Ovary (tissue), 10 donors: ENCODE measurements at regions of chr11 and their contacts with region 1.

Region 1: DNA sequence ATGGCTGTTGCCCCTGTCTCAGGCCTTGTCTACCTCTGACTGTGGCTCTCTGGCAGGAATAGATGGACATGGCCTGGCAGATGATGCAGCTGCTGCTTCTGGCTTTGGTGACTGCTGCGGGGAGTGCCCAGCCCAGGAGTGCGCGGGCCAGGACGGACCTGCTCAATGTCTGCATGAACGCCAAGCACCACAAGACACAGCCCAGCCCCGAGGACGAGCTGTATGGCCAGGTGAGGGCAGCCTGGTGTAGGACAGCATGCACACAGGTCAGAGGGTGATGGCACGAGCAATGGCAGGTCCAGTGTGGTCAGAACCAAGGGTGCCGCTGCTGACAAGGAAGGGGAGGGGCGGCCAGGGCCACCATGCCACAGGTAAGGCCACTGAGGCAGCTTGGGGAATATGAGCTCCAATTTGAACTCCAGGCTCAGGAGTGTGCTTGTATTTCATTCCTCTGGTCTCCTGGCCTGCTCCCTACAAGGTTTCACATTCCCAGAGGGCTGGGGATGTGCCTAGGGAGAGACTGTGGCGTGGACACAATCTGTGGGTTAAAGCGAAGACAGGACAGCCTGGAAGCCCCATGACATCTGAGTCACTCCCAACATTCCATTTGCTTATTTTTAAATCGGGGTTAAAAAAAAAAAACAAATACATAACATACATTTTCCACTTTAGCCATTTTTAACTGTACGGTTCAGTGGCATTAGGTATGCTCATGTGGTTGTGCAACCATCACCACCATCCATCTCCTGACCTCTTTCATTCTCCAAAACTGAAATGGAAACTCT is 558 bp downstream of the FOLR3 start:
- DNase-seq: no peak
- H3K4me3 ChIP-seq: no peak overlapping the region
- H3K27ac ChIP-seq: no peak overlapping the region
- H3K4me1 ChIP-seq: no peaks in the 10 kb centered on the region
- H3K27me3 ChIP-seq: no peaks in the 10 kb centered on the region
- CTCF ChIP-seq: no peak
- EP300 ChIP-seq: no peak
- POLR2A ChIP-seq: no peak

Region 2: DNA sequence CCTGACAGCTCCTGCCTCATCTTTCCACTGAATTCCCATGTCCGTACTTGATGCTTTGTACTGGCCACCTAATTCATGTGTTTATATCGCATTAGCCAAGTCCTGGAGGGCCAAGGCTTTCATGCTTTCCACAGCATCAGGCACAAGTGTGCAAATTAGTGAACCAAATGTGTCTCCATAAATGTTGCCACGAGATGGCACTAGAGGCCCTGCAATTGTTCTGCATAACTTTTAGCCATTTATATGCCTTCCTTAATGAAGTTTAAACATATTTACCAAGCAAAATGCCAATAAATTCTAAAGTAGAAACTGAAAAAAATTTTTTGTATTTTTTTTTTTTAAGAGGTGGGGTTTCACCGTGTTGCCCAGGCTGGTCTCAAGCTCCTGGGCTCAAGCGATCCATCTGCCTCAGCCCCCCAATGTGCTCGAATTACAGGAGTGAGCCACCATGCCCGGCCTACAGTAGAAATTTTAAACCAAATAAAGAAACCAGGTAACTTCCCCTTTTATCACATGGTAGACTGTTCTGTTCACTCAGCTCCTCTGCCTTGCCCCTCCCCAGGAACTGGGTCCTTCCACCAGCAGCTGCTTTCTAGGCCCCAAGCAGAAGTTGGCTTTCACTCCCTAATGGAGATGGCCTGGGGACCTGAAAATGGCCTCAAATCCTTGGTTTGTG is 158.2 kb before region 1 on chr11:
- intact Hi-C with region 1: loop called in 1 of 4 experiments (anchors 10 kb)
- DNase-seq: peak in 3 of 5 donors; percentile 34 to 67 (median 55)
- H3K4me3 ChIP-seq: no peak overlapping the region
- H3K27ac ChIP-seq: no peak overlapping the region
- H3K4me1 ChIP-seq: no peaks in the 10 kb centered on the region
- H3K27me3 ChIP-seq: no peaks in the 10 kb centered on the region
- CTCF ChIP-seq: peak in 2 of 3 donors; percentile 67 to 71
- EP300 ChIP-seq: no peak
- POLR2A ChIP-seq: no peak

Region 3: GRCh38 chr11:72015511-72016171 is 120.4 kb before region 1 on chr11:
- intact Hi-C with region 1: no loop called
- DNase-seq: no peak
- H3K4me3 ChIP-seq: no peak overlapping the region
- H3K27ac ChIP-seq: no peak overlapping the region
- H3K4me1 ChIP-seq: peaks cover 9% of the 10 kb centered on the region
- H3K27me3 ChIP-seq: no peaks in the 10 kb centered on the region
- CTCF ChIP-seq: peak in 1 of 3 donors; percentile 10
- EP300 ChIP-seq: no peak
- POLR2A ChIP-seq: no peak

Region 4: DNA sequence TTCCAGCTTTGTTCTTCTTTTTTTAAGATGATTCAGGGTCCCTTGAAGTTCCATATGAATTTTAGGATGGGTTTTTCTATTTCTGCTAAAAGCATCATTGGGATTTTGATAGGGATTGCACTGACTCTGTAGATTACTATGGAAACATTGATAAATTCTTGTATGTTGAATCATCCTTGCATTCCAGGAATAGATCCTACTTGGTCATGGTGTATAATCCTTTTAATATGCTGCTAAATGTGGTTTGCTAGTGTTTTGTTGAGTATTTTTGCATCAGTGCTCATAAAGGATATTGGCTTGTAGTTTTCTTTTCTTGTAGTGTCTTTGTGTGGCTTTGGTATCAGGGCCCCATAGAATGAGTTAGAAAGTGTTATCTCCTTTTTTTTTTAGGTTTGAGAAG is 142.8 kb after region 1 on chr11:
- intact Hi-C with region 1: no loop called
- DNase-seq: no peak
- H3K4me3 ChIP-seq: no peak overlapping the region
- H3K27ac ChIP-seq: no peak overlapping the region
- H3K4me1 ChIP-seq: no peaks in the 10 kb centered on the region
- H3K27me3 ChIP-seq: no peaks in the 10 kb centered on the region
- CTCF ChIP-seq: no peak
- EP300 ChIP-seq: no peak
- POLR2A ChIP-seq: no peak